ENCODE measurements at regions of chr18 and their contacts with region 1.

Region 1: GRCh38 chr18:9334329-9334972 is at the start of gene TWSG1:
- DNase-seq: peak; percentile 49
- H3K4me3 ChIP-seq: peak within 1 kb of the TSS; percentile 71
- H3K27me3 ChIP-seq: no peaks in the 10 kb centered on the region
- CTCF ChIP-seq: peak; percentile 58
- polyA plus RNA-seq, gene TWSG1: 127 and 167 TPM in 2 replicates

Region 2: DNA sequence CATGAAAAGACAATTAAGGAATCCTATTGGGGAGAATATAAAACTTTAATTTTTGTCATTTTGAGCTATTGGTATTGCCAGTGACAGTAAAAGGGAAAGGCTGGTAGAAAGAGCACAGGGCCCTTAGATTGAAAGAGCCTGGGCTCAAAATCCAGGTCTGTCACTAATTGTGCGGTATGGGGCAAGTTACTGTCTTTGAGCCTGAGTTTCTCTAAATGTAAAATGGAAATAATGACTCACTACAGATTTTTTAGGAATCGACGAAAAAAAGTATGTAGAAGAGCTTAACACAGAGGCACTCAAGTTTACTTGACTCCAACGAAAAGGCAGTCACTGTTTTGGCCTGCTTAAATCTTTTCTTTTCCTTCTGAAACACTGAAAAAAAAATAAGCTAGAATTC is 224.9 kb before region 1 on chr18:
- CTCF ChIA-PET with region 1: no interaction called
- POLR2A ChIA-PET with region 1: no interaction called
- DNase-seq: no peak
- H3K4me3 ChIP-seq: no peak overlapping the region
- H3K27me3 ChIP-seq: no peaks in the 10 kb centered on the region
- CTCF ChIP-seq: no peak

Region 3: DNA sequence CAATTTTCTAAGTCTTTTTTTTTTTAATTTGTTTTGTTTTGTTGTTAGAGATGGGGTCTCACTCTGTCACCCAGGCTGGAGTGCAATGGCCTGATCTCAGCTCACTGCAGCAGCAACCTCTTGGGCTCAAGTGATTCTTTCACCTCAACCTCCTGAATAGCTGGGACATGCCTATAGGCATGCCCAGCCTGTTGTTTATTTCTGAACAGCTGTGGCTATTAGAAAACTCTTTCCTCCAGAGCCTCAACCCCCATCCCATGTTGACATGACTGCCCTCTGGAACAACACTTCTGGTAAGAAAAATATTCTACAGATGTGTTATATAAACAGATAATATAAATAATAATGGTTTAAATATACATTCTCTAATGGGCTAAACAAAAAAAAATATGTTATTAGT is 44.3 kb before region 1 on chr18:
- CTCF ChIA-PET with region 1: no interaction called
- POLR2A ChIA-PET with region 1: no interaction called
- DNase-seq: no peak
- H3K4me3 ChIP-seq: no peak overlapping the region
- H3K27me3 ChIP-seq: no peaks in the 10 kb centered on the region
- CTCF ChIP-seq: no peak

Region 4: DNA sequence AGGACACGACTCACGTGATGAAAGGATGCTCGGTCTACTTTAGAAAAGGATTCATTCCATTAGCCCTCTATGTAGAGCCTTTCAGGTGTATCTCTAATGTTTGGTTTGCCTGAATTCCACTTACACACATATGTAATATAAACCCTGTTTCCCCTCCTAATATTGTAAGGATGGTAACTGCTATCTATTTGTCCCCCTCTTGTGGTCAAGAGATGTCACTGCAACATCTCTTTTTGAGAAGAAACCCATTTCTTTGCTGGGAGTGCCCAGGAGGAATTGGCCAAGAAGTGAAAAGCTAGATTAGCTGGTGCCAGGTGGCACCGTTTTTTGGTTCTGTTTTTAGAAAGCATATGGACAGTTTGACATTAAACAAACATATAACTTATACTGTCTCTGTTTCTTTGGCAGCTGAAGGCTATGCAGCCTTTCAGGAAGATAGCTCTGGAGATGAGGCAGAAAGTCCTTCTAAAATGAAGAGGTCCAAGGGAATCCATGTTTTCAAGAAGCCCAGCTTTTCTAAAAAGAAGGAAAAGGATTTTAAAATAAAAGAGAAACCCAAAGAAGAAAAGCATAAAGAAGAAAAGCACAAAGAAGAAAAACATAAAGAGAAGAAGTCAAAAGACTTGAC is 182.1 kb after region 1 on chr18:
- CTCF ChIA-PET with region 1: interaction called, 13 read pairs
- POLR2A ChIA-PET with region 1: no interaction called
- DNase-seq: no peak
- H3K4me3 ChIP-seq: no peak overlapping the region
- H3K27me3 ChIP-seq: no peaks in the 10 kb centered on the region
- CTCF ChIP-seq: peak; percentile 83